SK-N-SH (cell line): ENCODE measurements at regions of chr11 and their contacts with region 1.

Region 1: DNA sequence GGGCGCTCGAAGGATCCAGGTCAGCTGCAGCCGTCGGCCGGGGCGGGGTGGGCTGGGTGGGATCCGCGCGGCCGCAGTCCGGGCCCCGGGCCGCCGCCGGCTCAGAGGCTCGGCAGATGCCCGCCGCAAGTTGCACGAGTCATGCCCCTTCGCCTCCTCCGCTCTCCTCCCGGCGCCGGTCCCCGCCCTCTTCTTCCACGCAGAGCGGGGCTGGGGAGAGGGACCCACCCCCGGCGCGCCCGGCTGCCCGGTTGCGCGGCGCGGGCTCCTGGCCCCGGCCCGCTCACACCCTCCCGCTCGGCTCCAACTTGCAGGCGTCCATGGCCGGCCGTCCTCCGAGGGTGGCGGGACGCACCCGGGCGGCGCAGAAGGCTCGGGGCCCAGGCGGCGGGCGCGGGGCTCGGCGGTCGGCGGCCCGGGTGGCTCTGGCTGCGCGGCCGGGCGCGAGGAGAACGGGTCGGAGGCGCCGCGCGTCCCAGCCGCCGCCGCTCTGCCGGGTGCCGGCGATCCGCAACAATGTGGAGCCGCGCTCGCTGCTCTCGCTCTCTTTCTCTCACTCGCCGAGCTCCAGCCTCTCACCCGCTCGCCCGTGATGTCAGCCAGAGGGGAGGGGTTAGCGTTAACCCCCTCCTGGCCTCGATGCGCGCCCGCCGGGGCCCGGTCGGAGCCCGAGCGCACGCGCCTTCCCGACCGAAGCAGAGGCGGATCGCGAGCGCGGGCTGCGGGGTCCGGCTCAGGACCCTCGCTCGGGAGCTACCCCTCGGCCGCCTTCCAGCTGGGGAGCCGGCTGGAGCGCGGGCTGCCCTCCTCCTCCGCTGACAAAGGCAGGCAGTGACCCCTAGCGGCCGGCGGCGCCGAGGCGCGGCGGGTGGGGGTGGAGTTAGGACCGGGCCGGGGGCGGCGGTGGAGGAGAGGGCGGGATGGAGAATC is at the start of gene NECTIN1:
- DNase-seq: peak; percentile 96
- H3K4me3 ChIP-seq: peak within 1 kb of the TSS; percentile 84 to 87
- H3K27ac ChIP-seq: peak within 1 kb of the TSS; percentile 74 to 97
- H3K4me1 ChIP-seq: peaks cover 6 to 47% of the 10 kb centered on the region in 2 experiments; a peak in 2 of 4 replicates
- H3K27me3 ChIP-seq: no peaks in the 10 kb centered on the region
- CTCF ChIP-seq: peak; percentile 93
- EP300 ChIP-seq: no peak
- RAD21 ChIP-seq: peak; percentile 78
- polyA plus RNA-seq, gene NECTIN1: 6.7 and 9.1 TPM in 2 replicates

Region 2: GRCh38 chr11:119666463-119667131 is 62.3 kb before region 1 on chr11:
- CTCF ChIA-PET with region 1: interaction called, 44 read pairs
- POLR2A ChIA-PET with region 1: interaction called, 17 read pairs
- DNase-seq: peak; percentile 92
- H3K4me3 ChIP-seq: no peak overlapping the region; a peak in 1 of 4 replicates
- H3K27ac ChIP-seq: peak overlapping the region in 1 of 2 experiments; percentile 25; a peak in 1 of 4 replicates
- H3K4me1 ChIP-seq: peaks cover 0 to 15% of the 10 kb centered on the region in 2 experiments; a peak in 1 of 4 replicates
- H3K27me3 ChIP-seq: no peaks in the 10 kb centered on the region
- CTCF ChIP-seq: peak; percentile 88
- EP300 ChIP-seq: no peak
- RAD21 ChIP-seq: peak; percentile 98

Region 3: DNA sequence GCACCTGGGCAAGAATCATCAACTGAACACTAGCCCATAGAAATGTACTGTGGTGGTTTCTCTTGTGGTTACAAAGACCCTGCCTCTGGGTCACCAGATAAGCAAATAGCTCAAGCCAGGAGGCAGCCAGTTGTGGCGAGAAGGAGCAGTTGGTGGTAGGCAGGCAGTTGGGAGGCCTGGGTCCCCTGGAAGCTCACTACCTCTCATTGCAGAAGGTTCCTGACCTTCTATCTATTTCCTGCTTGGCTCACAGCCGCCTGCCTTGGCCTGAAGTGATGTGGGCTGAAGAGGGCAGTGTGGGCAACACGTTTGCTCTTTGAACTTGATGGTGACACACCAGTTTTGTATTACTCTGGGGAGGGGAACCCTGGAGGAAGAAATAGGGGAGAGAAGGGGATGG is 34.6 kb before region 1 on chr11:
- CTCF ChIA-PET with region 1: interaction called, 15 read pairs
- POLR2A ChIA-PET with region 1: interaction called, 3 read pairs
- DNase-seq: no peak
- H3K4me3 ChIP-seq: no peak overlapping the region
- H3K27ac ChIP-seq: peak overlapping the region in 1 of 2 experiments; percentile 20; a peak in 1 of 4 replicates
- H3K4me1 ChIP-seq: peaks cover 0 to 97% of the 10 kb centered on the region in 2 experiments; a peak in 1 of 4 replicates
- H3K27me3 ChIP-seq: no peaks in the 10 kb centered on the region
- CTCF ChIP-seq: no peak
- EP300 ChIP-seq: no peak
- RAD21 ChIP-seq: peak; percentile 39

Region 4: DNA sequence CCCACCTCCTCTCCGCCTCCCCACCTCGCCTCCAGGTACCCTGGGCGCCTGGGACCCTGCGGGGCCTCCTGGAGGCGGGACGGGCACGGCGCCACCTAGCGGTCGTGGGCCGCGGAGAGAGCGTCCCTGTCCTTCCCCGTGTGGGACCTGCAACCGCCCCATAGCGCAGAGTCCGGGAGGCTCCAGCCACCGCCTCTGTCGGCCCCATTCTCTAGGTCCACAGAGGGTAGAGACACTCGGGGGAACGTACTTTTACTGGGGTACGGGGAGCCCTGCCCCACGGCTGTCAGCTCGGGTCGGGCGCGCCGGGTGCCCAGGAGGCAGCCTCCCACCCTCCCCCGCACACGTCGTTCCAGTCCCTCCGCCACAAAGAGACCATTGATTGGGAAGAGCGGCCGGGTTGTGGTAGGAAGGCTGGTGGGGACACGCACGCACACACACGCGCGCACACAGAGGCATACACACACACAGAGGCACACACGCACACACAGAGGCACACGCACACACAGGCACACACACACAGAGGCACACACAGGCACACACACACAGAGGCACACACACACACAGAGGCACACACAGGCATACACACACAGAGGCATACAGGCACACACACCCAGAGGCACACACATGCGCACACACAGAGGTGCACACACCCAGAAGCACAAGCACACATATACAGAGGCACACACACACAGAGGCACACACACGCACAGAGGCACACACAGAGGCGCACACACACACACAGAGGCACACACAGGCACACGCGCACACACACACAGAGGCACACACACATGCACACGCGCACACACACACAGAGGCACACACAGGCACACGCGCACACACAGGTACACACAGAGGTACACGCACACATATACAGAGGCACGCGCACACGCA is 12.7 kb after region 1 on chr11:
- CTCF ChIA-PET with region 1: interaction called, 22 read pairs
- POLR2A ChIA-PET with region 1: interaction called, 8 read pairs
- DNase-seq: no peak
- H3K4me3 ChIP-seq: no peak overlapping the region
- H3K27ac ChIP-seq: no peak overlapping the region; a peak in 1 of 4 replicates
- H3K4me1 ChIP-seq: peaks cover 0 to 44% of the 10 kb centered on the region in 2 experiments; a peak in 2 of 4 replicates
- H3K27me3 ChIP-seq: no peaks in the 10 kb centered on the region
- CTCF ChIP-seq: peak; percentile 33
- EP300 ChIP-seq: no peak
- RAD21 ChIP-seq: no peak

Region 5: GRCh38 chr11:119782006-119782738 is 53.3 kb after region 1 on chr11:
- CTCF ChIA-PET with region 1: interaction called, 23 read pairs
- POLR2A ChIA-PET with region 1: interaction called, 28 read pairs
- DNase-seq: no peak
- H3K4me3 ChIP-seq: no peak overlapping the region
- H3K27ac ChIP-seq: peak overlapping the region in 1 of 2 experiments; percentile 77; a peak in 2 of 4 replicates
- H3K4me1 ChIP-seq: peaks cover 0 to 64% of the 10 kb centered on the region in 2 experiments; a peak in 2 of 4 replicates
- H3K27me3 ChIP-seq: no peaks in the 10 kb centered on the region; the same call in none of the 2 replicates
- CTCF ChIP-seq: no peak
- EP300 ChIP-seq: no peak
- RAD21 ChIP-seq: no peak

Region 6: DNA sequence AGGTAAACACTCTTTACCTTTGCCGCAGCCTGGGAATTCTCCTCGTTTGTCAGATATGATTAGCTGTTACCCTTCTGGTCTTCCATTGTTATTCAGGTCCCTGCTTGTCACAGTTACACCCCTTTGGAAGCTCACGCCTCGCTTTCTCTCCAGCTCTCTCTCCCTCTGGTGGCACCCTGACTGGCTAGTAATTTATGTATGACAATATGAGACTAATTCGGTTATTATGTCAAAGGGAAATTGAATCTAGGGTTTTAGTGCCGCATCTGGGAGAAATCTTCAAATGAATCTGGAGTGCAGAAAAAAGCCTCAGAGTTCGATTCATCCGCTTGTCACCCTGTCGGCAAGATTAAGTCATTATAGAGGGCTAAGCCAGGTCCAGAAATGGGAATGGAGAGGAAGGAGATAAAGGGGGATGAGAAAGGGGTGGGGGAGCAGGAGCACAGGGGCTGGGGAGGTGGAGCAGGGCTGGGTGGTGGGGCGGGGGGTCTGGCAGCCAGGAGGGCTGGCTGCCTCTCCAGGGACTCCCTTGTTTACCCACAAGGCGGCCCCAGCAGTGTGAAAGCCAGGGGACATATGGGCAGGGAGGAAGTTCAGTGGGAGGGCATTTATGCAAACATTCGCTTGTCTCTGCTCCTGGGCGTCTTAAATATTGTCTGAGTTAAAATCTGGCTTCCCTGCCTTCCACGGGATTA is 179.1 kb after region 1 on chr11:
- CTCF ChIA-PET with region 1: interaction called, 32 read pairs
- POLR2A ChIA-PET with region 1: interaction called, 22 read pairs
- DNase-seq: peak; percentile 86
- H3K4me3 ChIP-seq: no peak overlapping the region
- H3K27ac ChIP-seq: peak overlapping the region in 1 of 2 experiments; percentile 99; a peak in 2 of 4 replicates
- H3K4me1 ChIP-seq: peaks cover 0 to 74% of the 10 kb centered on the region in 2 experiments; a peak in 2 of 4 replicates
- H3K27me3 ChIP-seq: peaks cover 16% of the 10 kb centered on the region; the same call in 1 of the 2 replicates
- CTCF ChIP-seq: no peak
- EP300 ChIP-seq: peak in 1 of 2 experiments; percentile 94; a peak in 1 of 4 replicates
- RAD21 ChIP-seq: peak; percentile 57

Region 7: DNA sequence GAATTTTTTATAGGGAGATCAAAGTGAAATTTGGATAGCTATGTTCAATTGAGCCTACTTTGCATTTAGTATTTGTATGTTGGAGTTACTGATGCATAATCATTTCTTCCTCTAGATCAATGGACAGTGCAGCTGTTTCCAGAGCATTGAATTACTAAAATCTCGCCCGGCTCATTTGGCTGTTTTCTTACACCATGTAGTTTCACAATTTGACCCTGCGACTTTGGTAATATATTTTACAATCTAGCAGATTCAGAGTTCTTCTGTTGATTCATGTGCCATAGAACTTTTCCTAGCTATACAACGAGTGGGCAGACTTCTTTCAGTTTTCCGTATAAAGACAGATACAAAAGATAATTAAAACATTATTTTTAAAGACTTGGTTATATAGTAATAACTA is 712.7 kb after region 1 on chr11:
- CTCF ChIA-PET with region 1: no interaction called
- POLR2A ChIA-PET with region 1: no interaction called
- DNase-seq: no peak
- H3K4me3 ChIP-seq: no peak overlapping the region
- H3K27ac ChIP-seq: no peak overlapping the region
- H3K4me1 ChIP-seq: no peaks in the 10 kb centered on the region
- H3K27me3 ChIP-seq: no peaks in the 10 kb centered on the region
- CTCF ChIP-seq: no peak
- EP300 ChIP-seq: no peak
- RAD21 ChIP-seq: no peak